WTC11 (cell line): ENCODE measurements at regions of chr17 and their contacts with region 1.

Region 1: GRCh38 chr17:4161179-4161559 is 18.2 kb downstream of the CYB5D2 start:
- DNase-seq: peak; percentile 21
- ATAC-seq: peak; percentile 22; the same call in 1 of the 2 replicates
- H3K4me3 Mint-ChIP-seq: no peak overlapping the region
- H3K27ac Mint-ChIP-seq: peak overlapping the region; percentile 73
- H3K4me1 Mint-ChIP-seq: peaks cover 16% of the 10 kb centered on the region
- H3K27me3 Mint-ChIP-seq: no peaks in the 10 kb centered on the region
- CTCF ChIP-seq: no peak

Region 2: GRCh38 chr17:4054446-4054845 is 106.7 kb before region 1 on chr17:
- CTCF ChIA-PET with region 1: no interaction called
- POLR2A ChIA-PET with region 1: no interaction called
- DNase-seq: no peak
- ATAC-seq: no peak
- H3K4me3 Mint-ChIP-seq: no peak overlapping the region
- H3K27ac Mint-ChIP-seq: no peak overlapping the region; the same call in 1 of the 2 replicates
- H3K4me1 Mint-ChIP-seq: no peaks in the 10 kb centered on the region
- H3K27me3 Mint-ChIP-seq: no peaks in the 10 kb centered on the region
- CTCF ChIP-seq: no peak

Region 3: DNA sequence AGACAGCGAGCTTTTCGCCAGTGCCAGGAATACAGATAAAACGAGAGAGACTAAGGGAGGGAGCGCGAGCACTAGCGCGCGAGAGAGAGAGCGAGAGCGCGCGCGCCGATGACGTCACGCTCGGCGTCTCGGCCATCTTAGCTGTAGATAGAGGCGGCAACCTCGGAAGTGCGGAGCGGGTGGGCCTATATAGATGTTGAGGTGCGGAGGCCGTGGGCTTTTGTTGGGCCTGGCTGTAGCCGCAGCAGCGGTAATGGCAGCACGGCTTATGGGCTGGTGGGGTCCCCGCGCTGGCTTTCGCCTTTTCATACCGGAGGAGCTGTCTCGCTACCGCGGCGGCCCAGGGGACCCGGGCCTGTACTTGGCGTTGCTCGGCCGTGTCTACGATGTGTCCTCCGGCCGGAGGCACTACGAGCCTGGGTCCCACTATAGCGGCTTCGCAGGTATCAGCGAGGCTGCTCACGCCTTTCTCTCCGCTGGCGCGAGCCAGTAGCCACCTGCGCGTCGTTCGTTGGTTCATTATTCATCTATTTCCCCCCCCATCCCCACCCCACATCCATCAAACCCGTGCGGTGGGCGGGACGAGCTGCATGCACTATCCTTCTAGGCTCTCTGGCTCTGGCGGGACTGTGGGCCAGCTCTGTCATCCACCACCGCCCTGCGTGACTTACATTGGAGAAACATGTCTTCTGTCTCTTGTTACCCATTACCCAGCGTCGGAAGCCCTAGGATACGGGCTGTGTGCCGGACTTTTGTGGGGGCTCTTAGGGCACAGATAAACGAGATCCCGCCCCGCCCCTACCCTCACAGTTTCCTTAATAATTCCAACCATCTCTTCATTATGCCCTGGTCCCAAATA is 17.4 kb before region 1 on chr17:
- CTCF ChIA-PET with region 1: interaction called, 14 read pairs
- POLR2A ChIA-PET with region 1: interaction called, 10 read pairs
- DNase-seq: peak; percentile 89
- ATAC-seq: peak; percentile 78
- H3K4me3 Mint-ChIP-seq: peak overlapping the region; percentile 97
- H3K27ac Mint-ChIP-seq: peak overlapping the region; percentile 100
- H3K4me1 Mint-ChIP-seq: peaks cover 13% of the 10 kb centered on the region
- H3K27me3 Mint-ChIP-seq: no peaks in the 10 kb centered on the region
- CTCF ChIP-seq: no peak